ENCODE measurements at regions of chr6 and their contacts with region 1.

Region 1: DNA sequence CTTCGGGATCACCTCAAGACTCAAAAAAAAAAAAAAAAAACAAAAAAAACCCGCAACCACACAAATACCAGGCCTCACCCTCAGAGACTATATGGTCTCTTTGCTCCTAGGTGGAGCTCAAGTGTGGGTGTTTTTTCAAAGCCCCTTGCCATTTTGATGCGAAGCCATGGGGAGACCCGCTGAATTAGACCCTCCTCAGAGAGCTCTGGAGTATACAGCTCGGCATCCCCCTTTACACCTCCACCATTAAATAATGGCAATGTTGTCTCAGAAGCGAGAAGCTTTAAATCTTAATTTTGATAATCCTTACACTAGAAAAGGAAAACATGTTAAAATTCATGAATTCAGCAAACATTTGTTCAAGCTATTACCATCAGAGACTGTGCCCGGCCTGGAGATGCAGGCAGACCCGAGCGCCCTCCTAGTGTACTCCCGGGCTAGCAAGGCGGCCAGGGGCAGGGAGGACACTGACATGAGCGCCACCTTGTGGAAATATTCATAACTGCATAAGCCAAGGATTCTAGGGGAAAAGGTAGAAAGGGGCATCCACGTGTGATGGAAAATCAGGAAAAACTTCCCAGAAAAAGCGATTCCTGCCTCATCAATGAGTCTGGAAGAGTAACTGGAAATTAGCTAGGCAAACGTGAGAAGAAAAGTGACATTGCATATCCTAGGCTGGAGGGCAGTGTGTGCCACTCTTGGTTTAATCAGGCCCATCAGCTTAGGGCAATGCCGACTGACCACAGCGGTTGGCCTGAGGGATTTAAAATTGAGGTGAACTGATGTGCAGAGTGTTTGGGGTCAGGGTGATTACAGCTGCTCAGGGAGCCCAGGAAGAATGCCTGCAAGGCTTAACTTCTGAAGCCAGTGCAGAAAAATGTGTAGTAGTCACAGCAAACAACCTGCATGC is 72.5 kb downstream of the B3GAT2 start:
- DNase-seq: peak; percentile 64
- H3K4me3 Mint-ChIP-seq: no peak overlapping the region
- H3K27ac Mint-ChIP-seq: no peak overlapping the region
- H3K4me1 Mint-ChIP-seq: no peaks in the 10 kb centered on the region
- H3K27me3 Mint-ChIP-seq: peaks cover 13% of the 10 kb centered on the region

Region 2: GRCh38 chr6:70310063-70310694 is 574.1 kb before region 1 on chr6:
- CTCF ChIA-PET with region 1: interaction called, 15 read pairs
- POLR2A ChIA-PET with region 1: no interaction called
- intact Hi-C with region 1: loop called (anchors 5 kb)
- DNase-seq: no peak
- H3K4me3 Mint-ChIP-seq: no peak overlapping the region
- H3K27ac Mint-ChIP-seq: no peak overlapping the region
- H3K4me1 Mint-ChIP-seq: peaks cover 2% of the 10 kb centered on the region
- H3K27me3 Mint-ChIP-seq: peaks cover 15% of the 10 kb centered on the region

Region 3: DNA sequence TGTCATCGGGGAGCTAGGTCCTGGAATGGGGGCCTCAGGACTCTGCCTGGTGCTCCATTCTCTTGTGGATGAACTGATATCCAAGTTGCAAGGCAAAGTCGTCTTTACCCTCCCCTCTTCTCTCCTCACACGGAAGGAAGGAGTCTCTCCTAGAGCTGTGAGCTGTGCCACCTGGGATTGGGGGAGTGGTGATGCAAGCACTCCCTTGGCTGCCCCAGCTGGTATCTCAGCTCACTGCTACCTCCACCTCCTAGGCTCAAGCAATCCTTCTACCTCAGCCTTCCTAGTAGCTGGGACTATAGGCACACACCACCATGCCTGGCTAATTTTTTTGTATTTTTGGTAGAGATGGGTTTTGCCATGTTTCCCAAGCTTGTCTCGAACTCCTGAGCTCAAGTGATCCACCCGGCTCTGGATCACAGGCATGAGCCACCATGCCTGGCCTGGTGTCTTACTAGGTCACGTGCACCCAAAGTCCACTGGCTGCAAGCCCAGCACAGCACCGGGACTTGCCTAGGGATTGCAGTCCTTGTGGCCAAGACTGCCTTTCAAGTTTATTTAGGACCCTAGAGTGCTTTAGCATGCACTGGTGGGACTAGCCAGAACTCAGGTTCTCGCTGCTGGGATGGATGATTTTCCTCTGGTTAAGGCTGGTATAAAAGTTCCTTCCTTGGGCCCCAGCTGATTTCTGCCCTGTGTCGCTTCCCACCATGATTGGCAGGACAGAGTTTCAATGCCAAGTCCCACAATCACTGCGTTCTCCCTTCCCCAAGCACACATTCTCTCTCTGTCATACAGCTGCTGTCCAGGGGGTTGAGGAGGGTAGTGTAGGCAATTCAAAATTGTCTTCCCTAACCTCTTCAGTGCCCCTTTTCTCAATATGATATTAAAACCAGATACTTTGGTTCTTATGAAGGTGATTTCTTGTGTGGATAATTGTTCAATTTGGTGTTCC is 183.1 kb before region 1 on chr6:
- CTCF ChIA-PET with region 1: interaction called, 63 read pairs
- POLR2A ChIA-PET with region 1: no interaction called
- intact Hi-C with region 1: loop called (anchors 1 kb)
- DNase-seq: no peak
- H3K4me3 Mint-ChIP-seq: no peak overlapping the region
- H3K27ac Mint-ChIP-seq: no peak overlapping the region
- H3K4me1 Mint-ChIP-seq: peaks cover 59% of the 10 kb centered on the region
- H3K27me3 Mint-ChIP-seq: no peaks in the 10 kb centered on the region

Region 4: GRCh38 chr6:70717038-70717801 is 167.1 kb before region 1 on chr6:
- CTCF ChIA-PET with region 1: interaction called, 152 read pairs
- POLR2A ChIA-PET with region 1: no interaction called
- intact Hi-C with region 1: no loop called
- DNase-seq: no peak
- H3K4me3 Mint-ChIP-seq: no peak overlapping the region
- H3K27ac Mint-ChIP-seq: peak overlapping the region; percentile 59
- H3K4me1 Mint-ChIP-seq: peaks cover 44% of the 10 kb centered on the region
- H3K27me3 Mint-ChIP-seq: no peaks in the 10 kb centered on the region

Region 5: GRCh38 chr6:70779934-70780333 is 104.4 kb before region 1 on chr6:
- CTCF ChIA-PET with region 1: no interaction called
- POLR2A ChIA-PET with region 1: no interaction called
- intact Hi-C with region 1: no loop called
- DNase-seq: no peak
- H3K4me3 Mint-ChIP-seq: no peak overlapping the region
- H3K27ac Mint-ChIP-seq: no peak overlapping the region
- H3K4me1 Mint-ChIP-seq: no peaks in the 10 kb centered on the region
- H3K27me3 Mint-ChIP-seq: no peaks in the 10 kb centered on the region

Region 6: GRCh38 chr6:70955441-70956190 is 71.3 kb after region 1 on chr6:
- CTCF ChIA-PET with region 1: interaction called, 27 read pairs
- POLR2A ChIA-PET with region 1: no interaction called
- intact Hi-C with region 1: no loop called
- DNase-seq: peak; percentile 91
- H3K4me3 Mint-ChIP-seq: peak overlapping the region; percentile 70
- H3K27ac Mint-ChIP-seq: no peak overlapping the region
- H3K4me1 Mint-ChIP-seq: peaks cover 11% of the 10 kb centered on the region
- H3K27me3 Mint-ChIP-seq: peaks cover 42% of the 10 kb centered on the region

Measured in activated CD4-positive, alpha-beta memory T cell treated with anti-CD3 and anti-CD28 coated beads for 36 hours (primary cell).